Activated T-helper 1 cell treated with anti-CD3 and anti-CD28 coated beads, Interleukin-12 subunit alpha, Interleukin-12 subunit beta, Interleukin-2, Interleukin-4 antibody, amounts not matched to agents 30 ng/mL and 10 ng/mL and 1 ng/mL, durations not matched to agents 14 hours and 24 hours and 36 hours (primary cell): ENCODE measurements at regions of chr2 and their contacts with region 1.

Region 1: GRCh38 chr2:71331581-71332434 is at the start of gene ZNF638:
- DNase-seq: peak; percentile 90
- H3K4me3 Mint-ChIP-seq: peak within 1 kb of the TSS; percentile 99
- H3K27ac Mint-ChIP-seq: peak within 1 kb of the TSS; percentile 100
- H3K4me1 Mint-ChIP-seq: peaks cover 27% of the 10 kb centered on the region
- H3K27me3 Mint-ChIP-seq: peaks cover 6% of the 10 kb centered on the region
- total RNA-seq, gene ZNF638: 88.8 and 96.8 TPM in 2 replicates

Region 2: GRCh38 chr2:71276311-71277146 is 55.3 kb before region 1 on chr2:
- intact Hi-C with region 1: loop called (anchors 1 kb)
- DNase-seq: peak; percentile 88
- H3K4me3 Mint-ChIP-seq: peak overlapping the region; percentile 76
- H3K27ac Mint-ChIP-seq: no peak overlapping the region
- H3K4me1 Mint-ChIP-seq: peaks cover 8% of the 10 kb centered on the region
- H3K27me3 Mint-ChIP-seq: peaks cover 69% of the 10 kb centered on the region

Region 3: GRCh38 chr2:71299507-71299906 is 32.3 kb before region 1 on chr2:
- intact Hi-C with region 1: loop called (anchors 1 kb)
- DNase-seq: no peak
- H3K4me3 Mint-ChIP-seq: no peak overlapping the region
- H3K27ac Mint-ChIP-seq: no peak overlapping the region
- H3K4me1 Mint-ChIP-seq: no peaks in the 10 kb centered on the region
- H3K27me3 Mint-ChIP-seq: peaks cover 12% of the 10 kb centered on the region